Activated CD4-positive, alpha-beta T cell treated with anti-CD3 and anti-CD28 coated beads for 36 hours (primary cell): ENCODE measurements at regions of chr12 and their contacts with region 1.

Region 1: DNA sequence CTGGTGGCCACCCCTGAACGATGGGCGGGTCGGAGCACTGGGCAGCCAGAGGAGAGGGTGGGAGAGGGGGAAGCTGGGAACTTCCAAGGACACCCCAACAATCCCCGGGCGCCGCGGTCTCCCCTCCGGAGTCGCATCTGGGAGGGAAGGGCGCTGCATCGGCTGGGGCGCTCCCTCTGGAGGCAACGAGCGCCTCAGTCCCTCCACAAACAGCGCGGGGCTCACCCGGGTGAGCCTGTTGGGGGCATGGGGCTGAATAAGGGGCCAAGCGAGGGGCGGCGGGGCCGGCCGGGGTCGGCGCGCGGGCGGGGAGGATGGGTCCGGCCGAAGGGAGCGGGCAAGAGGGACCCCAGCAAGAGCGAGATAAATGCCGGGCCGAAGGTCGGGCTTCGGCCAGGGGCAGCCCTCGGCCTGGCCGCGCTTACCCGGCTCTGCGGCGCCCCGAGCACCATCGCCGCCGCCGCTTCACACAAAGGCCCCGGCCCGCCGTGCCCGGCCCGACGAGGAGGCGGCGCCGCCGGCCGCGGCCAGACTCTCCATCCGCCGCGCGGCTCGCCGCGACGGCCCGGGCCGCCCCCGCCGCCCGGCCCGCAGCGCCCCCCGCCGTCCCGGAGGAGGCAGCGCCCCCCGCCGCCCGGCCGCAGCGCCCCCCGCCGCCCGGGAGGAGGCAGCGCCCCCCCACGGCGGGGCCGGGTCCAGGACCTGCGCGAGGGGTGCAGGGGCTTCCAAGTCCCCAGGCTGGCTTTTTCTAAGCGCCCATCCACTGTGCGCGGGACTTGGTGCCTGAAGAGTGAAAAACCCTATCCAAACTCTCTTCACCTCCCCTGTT is at the start of gene ZBTB39:
- DNase-seq: peak; percentile 80
- ATAC-seq: peak; percentile 69
- H3K4me3 Mint-ChIP-seq: peak within 1 kb of the TSS; percentile 79
- H3K27ac Mint-ChIP-seq: peak within 1 kb of the TSS; percentile 78
- H3K4me1 Mint-ChIP-seq: peaks cover 64% of the 10 kb centered on the region
- H3K27me3 Mint-ChIP-seq: no peaks in the 10 kb centered on the region
- total RNA-seq, gene ZBTB39: 6.4 to 6.6 TPM

Region 2: DNA sequence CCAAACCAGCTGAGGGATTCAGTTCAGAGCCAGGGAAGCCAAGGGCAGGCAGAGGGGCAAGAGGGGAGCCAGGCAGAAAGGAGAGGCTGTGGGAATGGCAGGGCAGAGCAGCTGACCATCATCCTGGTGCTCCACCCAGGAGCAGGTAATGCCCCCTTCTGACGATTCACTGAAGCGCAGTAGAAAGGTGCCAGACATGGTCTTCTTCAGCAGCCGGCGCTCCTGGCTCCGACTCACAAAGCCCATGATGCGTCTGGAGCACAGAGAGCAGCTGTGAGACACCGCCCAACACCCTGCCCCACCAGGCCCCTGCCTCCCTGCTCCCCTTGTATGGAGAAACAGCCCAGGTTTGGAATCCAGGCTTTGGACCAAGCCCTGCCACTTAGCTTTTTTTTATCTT is 659.5 kb before region 1 on chr12:
- CTCF ChIA-PET with region 1: no interaction called
- POLR2A ChIA-PET with region 1: no interaction called
- intact Hi-C with region 1: no loop called
- DNase-seq: peak; percentile 56
- ATAC-seq: peak; percentile 35
- H3K4me3 Mint-ChIP-seq: no peak overlapping the region
- H3K27ac Mint-ChIP-seq: no peak overlapping the region
- H3K4me1 Mint-ChIP-seq: peaks cover 3% of the 10 kb centered on the region
- H3K27me3 Mint-ChIP-seq: no peaks in the 10 kb centered on the region

Region 3: DNA sequence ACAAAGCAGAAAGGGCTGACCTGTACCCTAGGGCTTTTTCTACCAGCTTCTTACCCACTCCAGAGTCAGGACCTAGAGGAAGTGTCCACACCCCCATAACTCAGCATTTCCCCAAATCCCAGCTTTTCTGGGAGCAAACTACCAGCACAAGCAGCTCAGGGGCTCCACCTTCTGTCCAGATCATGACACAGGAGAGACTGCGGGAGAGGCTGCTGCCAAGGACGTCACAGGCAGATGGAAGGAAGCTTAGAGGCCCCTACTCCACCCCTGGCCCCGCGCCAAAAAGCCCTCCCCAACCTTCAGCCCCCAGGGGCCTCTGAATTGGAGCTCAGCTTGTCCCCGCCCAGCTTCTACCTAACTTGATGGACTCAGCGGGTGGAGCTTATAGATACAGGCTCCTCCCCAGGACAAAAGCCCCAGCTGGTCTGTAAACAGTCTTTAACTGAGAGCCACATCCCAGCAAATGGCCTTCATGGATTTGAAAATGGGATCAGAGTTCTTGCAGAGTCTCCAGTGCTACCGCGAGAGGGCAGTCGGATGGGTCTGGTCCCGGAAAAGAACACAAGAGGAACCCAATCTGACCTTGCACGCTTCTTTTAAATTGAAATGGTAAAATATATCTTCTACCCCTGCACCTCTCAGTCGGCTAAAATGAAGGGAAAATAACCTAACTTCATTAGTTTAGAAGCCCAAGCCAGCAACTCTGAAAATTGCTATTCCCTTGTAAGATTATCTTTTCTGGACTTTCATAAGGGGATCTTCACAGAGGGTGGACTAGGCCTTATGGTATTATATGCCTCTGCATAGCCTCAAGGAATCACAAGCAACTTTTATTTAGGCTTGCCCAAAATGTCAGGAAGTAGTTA is 369.3 kb before region 1 on chr12:
- CTCF ChIA-PET with region 1: interaction called, 4 read pairs
- POLR2A ChIA-PET with region 1: no interaction called
- intact Hi-C with region 1: loop called in 1 of 2 experiments (anchors 5 kb)
- DNase-seq: peak; percentile 98
- ATAC-seq: peak; percentile 73
- H3K4me3 Mint-ChIP-seq: peak overlapping the region; percentile 87
- H3K27ac Mint-ChIP-seq: peak overlapping the region; percentile 92
- H3K4me1 Mint-ChIP-seq: peaks cover 60% of the 10 kb centered on the region
- H3K27me3 Mint-ChIP-seq: no peaks in the 10 kb centered on the region

Region 4: DNA sequence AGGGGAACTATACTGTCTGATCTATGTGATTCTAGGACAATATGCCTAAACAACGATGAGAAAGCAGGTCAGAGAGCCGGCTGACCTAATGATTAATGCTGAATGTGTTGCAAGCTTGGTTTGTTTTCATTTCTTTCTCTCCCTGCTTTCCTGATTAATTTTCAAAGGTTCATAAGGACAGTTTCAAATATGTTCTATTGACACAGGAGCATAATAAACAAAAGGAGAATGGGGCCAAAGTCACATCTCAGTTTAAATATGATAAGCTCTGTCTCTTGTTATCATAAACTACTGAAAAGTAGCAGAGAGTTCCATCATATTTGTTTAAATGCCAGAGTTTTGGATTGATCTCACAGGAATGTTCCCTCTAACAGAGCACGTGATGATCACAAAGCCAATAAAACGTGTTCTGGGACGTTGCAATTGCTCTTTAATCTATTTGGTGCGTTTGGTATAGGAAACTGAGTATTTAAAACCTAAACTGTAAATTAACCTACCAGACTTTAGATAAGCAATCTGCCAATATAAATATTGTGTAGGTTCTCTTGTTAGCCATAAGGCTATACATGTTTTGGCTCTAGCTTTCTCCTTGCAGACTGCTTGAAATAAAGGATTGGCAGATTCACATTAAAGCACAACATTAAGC is 246.8 kb before region 1 on chr12:
- CTCF ChIA-PET with region 1: interaction called, 105 read pairs
- POLR2A ChIA-PET with region 1: no interaction called
- intact Hi-C with region 1: loop called (anchors 1 kb)
- DNase-seq: no peak
- ATAC-seq: no peak
- H3K4me3 Mint-ChIP-seq: no peak overlapping the region
- H3K27ac Mint-ChIP-seq: no peak overlapping the region
- H3K4me1 Mint-ChIP-seq: peaks cover 10% of the 10 kb centered on the region
- H3K27me3 Mint-ChIP-seq: no peaks in the 10 kb centered on the region

Region 5: DNA sequence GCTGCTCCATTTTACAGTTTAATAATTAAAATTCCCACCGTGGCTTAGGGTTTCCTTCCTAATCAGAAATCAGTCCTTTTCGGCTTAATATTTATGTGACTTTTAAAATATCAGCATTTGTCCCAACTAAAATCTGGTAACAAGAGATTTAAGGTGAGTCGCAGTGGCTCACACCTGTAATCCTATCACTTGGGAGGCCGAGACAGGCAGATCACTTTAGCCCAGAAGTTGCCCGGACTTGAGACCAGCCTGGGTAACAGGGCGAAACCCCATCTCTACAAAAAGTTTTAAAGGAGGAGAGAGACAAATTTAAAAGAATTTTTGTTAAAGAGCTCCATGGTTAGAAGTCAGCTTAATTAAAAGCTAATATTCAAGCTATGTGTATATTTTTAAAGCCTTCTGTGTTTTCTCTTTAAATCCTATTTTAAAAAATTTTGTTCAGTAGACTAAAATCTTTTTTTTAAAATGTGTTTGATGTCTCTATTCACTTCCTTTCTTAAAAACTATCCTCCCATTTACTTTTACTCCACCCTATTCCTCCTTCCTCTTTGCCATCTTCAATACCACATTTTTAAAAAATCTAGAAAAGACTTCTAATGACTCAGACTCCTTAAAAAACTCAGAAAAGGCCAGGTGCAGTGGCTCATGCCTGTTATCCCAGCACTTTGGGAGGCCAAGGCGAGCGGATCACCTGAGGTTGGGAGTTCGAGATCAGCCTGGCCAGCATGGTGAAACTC is 14.0 kb after region 1 on chr12:
- CTCF ChIA-PET with region 1: interaction called, 35 read pairs
- POLR2A ChIA-PET with region 1: no interaction called
- intact Hi-C with region 1: no loop called
- DNase-seq: no peak
- ATAC-seq: no peak
- H3K4me3 Mint-ChIP-seq: no peak overlapping the region
- H3K27ac Mint-ChIP-seq: peak overlapping the region; percentile 60
- H3K4me1 Mint-ChIP-seq: peaks cover 18% of the 10 kb centered on the region
- H3K27me3 Mint-ChIP-seq: no peaks in the 10 kb centered on the region

Region 6: DNA sequence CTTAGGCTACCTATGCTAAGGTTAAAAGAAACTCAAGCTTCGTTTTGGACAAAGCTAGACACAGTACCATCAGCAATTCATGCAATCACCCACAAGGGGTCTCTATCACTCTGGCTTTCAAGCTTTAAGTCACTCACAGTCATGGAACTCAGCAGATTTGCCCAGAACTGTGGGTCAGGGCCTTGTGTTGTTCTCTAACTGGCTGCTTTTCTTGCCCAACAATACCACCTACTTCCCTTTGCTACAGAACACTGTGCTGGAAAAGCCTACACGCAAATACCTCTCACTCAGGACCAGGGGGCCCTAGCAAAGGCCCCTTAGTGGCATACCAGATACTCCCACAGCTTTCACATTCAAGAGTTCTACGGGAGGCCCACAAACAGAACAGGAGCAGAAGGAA is 63.3 kb after region 1 on chr12:
- CTCF ChIA-PET with region 1: interaction called, 207 read pairs
- POLR2A ChIA-PET with region 1: interaction called, 3 read pairs
- intact Hi-C with region 1: no loop called
- DNase-seq: peak; percentile 74
- ATAC-seq: peak; percentile 73
- H3K4me3 Mint-ChIP-seq: peak overlapping the region; percentile 39
- H3K27ac Mint-ChIP-seq: peak overlapping the region; percentile 89
- H3K4me1 Mint-ChIP-seq: peaks cover 74% of the 10 kb centered on the region
- H3K27me3 Mint-ChIP-seq: no peaks in the 10 kb centered on the region

Region 7: DNA sequence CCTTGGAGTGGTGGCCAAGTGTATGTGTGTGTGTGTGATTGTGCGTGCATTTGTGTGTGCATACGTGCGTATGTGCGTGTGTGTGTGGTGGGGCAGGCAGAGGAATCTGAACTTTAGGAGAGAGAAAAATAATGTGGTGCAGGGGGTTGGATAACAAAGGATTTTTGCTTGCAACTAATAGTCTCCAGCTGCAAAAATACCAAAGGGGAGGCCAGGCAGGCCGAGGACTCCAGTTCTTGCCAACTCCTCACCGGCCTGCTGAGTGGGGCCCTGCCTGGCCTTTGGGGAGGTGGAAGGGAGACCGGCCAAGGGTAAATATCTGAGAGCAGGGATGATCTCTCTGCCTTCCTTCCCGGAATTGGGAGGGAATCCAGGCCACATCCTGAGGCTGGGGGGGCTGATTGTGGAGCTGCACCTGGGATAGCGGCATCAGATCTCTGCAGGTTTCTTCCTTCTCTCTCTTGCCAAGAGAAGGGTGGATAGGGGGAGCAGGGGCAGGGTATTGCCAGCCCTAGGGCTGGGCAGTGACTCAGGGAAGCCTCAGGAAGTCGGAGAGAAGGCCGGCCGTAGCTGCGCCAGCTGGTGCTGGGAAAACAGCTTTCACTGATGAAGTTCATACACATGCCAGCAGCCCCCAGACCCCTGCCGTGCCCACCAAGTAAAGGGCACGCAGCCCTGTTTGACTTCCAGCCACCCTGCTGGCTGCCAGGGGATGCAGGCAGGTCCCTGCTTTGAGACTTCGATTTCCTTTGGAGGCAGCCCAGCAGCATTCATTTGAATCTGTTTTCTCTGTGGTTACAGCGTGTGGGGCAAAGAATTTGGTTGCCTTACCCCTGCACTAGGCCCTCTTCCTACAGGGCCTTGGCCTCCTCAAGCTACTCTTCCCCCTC is 145.8 kb after region 1 on chr12:
- CTCF ChIA-PET with region 1: no interaction called
- POLR2A ChIA-PET with region 1: no interaction called
- intact Hi-C with region 1: no loop called
- DNase-seq: no peak
- ATAC-seq: no peak
- H3K4me3 Mint-ChIP-seq: no peak overlapping the region
- H3K27ac Mint-ChIP-seq: no peak overlapping the region
- H3K4me1 Mint-ChIP-seq: no peaks in the 10 kb centered on the region
- H3K27me3 Mint-ChIP-seq: no peaks in the 10 kb centered on the region

Region 8: DNA sequence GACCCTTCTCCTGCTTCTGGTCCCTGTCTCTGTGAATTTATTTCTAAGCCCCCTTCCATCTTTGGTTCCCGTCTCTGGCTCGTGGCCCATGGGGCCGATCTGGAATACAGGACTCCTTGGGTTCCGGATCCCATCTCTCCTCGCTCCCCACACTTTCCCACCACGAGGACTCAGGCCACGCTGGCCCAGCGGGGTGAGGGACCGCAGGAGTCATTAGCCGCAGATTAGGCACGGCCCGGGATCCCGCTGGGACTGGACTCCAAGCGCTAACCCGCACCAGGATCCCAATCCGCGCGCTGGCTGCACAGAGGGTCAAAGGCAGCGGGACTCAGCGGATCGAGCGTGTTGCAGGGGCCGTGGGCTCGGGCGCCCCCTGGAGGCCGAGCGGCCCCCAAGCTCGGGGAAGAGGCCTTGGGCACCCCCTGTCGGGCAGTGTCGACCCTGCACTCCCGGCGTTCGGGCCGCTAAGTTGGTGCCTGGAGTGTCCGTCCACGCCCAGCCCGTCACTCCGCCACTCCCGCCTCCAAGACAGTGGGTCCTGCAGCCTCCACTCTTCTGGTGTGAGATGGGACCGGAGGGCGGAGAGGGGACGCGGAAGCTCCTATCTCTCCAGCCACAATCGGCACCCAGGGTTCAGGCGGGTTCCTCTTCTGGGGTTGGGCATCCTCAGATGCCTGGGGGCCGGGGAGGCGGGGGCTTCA is 232.8 kb after region 1 on chr12:
- CTCF ChIA-PET with region 1: interaction called, 3 read pairs
- POLR2A ChIA-PET with region 1: no interaction called
- intact Hi-C with region 1: loop called in 1 of 2 experiments (anchors 5 kb)
- DNase-seq: peak; percentile 94
- ATAC-seq: peak; percentile 57
- H3K4me3 Mint-ChIP-seq: peak overlapping the region; percentile 83
- H3K27ac Mint-ChIP-seq: peak overlapping the region; percentile 80
- H3K4me1 Mint-ChIP-seq: peaks cover 70% of the 10 kb centered on the region
- H3K27me3 Mint-ChIP-seq: peaks cover 44% of the 10 kb centered on the region